Lower leg skin (tissue), 4 donors: ENCODE measurements at regions of chr11 and their contacts with region 1.

Region 1: GRCh38 chr11:2196970-2197770 is 25.6 kb upstream of the TH start:
- DNase-seq: peak; percentile 71 to 94
- H3K4me3 ChIP-seq: no peak overlapping the region
- CTCF ChIP-seq: peak in 1 of 3 donors; percentile 67
- POLR2A ChIP-seq: no peak

Region 2: DNA sequence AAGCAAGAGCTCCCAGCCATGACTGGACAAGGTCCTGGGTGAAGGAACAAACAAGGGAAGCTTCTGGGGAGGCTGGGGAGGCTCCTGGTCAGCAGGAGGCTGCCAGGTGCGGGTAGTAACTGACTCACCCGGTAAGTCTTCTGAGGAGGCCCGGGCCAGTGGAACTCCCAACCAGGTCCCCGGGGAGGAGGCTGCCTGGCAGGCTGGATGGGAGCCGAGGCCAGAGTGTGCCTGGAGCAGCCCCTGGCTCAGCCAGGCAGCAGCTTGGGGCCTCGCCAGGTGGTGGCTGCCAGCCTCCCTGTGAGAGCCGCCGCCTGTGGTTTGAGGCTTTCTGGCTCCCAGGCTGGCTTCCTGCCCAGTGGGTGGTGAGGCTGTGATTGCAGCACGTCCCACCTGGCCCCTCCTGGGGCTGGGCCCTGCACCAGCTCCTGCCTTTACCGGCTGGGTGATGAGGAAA is 104.2 kb before region 1 on chr11:
- intact Hi-C with region 1: no loop called
- DNase-seq: peak; percentile 79 to 93
- H3K4me3 ChIP-seq: no peak overlapping the region
- CTCF ChIP-seq: no peak
- POLR2A ChIP-seq: no peak

Region 3: DNA sequence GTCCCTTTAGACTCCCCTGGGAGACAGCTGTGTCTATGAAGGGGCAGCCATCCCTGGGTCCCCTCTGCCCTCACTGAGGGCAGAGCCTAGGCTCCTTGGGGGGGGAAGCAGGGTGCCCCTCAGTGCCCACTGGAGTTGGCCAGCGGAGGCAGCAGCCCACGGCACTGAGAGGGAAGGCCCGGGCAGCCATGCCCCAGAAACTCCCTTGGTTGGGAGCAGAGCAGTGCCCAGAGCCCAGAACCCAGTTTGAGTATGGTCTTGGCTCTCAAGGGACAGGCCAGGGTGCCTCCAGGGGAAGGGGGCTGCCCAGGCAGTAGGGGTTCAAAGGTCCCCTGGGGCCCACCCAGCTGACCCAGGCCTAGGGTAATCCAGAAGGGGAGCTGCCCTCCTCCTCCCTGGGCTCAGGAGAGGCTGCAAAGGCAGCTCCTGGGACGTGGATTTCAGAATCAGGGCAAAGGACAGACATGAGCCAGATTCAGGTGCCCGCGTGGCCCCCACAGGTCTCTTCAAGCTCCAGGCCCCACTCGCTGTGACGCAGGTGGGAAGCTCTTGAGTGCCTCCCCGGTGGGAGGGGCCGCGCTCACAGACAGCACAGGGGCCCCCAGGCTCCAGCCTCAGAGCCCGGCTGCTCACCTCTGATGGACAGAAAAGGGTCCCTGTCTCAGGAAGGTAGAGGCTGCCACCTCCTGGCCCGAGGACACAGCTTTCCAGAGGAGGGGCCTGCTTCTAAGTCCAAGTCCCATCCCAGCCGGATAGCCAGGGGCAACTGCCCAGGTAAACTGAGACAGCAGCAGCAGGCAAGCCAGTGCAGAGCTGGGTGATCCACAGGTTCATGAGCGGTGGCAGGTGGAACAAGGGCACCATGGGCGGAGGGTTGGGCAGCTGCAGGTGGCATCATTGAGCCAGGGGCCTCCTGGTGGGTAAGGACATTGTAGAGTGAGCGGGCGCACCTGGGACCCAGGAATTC is 101.9 kb after region 1 on chr11:
- intact Hi-C with region 1: loop called (anchors 5 kb)
- DNase-seq: peak; percentile 26 to 83
- H3K4me3 ChIP-seq: no peak overlapping the region
- CTCF ChIP-seq: no peak
- POLR2A ChIP-seq: no peak

Region 4: GRCh38 chr11:2420502-2421225 is 223.5 kb after region 1 on chr11:
- intact Hi-C with region 1: loop called (anchors 5 kb)
- DNase-seq: peak in 1 of 2 donors; percentile 94
- H3K4me3 ChIP-seq: no peak overlapping the region
- CTCF ChIP-seq: peak in 1 of 3 donors; percentile 60
- POLR2A ChIP-seq: no peak

Region 5: GRCh38 chr11:2888266-2888968 is 691.2 kb after region 1 on chr11:
- intact Hi-C with region 1: loop called (anchors 10 kb)
- DNase-seq: peak; percentile 89 to 99
- H3K4me3 ChIP-seq: no peak overlapping the region
- CTCF ChIP-seq: peak in 1 of 3 donors; percentile 95
- POLR2A ChIP-seq: no peak

Region 6: GRCh38 chr11:3160252-3161031 is 963.3 kb after region 1 on chr11:
- intact Hi-C with region 1: no loop called
- DNase-seq: peak; percentile 85 to 97
- H3K4me3 ChIP-seq: peak overlapping the region; percentile 3
- CTCF ChIP-seq: no peak
- POLR2A ChIP-seq: no peak